ENCODE measurements at regions of chr20 and their contacts with region 1.

Region 1: GRCh38 chr20:4956200-4956810 is 45.0 kb downstream of the SLC23A2 start:
- DNase-seq: no peak
- H3K4me3 ChIP-seq: no peak overlapping the region
- H3K27ac ChIP-seq: no peak overlapping the region
- H3K4me1 ChIP-seq: no peaks in the 10 kb centered on the region
- H3K27me3 ChIP-seq: no peaks in the 10 kb centered on the region
- CTCF ChIP-seq: peak; percentile 75 to 85 (median 77)
- EP300 ChIP-seq: no peak
- POLR2A ChIP-seq: no peak

Region 2: DNA sequence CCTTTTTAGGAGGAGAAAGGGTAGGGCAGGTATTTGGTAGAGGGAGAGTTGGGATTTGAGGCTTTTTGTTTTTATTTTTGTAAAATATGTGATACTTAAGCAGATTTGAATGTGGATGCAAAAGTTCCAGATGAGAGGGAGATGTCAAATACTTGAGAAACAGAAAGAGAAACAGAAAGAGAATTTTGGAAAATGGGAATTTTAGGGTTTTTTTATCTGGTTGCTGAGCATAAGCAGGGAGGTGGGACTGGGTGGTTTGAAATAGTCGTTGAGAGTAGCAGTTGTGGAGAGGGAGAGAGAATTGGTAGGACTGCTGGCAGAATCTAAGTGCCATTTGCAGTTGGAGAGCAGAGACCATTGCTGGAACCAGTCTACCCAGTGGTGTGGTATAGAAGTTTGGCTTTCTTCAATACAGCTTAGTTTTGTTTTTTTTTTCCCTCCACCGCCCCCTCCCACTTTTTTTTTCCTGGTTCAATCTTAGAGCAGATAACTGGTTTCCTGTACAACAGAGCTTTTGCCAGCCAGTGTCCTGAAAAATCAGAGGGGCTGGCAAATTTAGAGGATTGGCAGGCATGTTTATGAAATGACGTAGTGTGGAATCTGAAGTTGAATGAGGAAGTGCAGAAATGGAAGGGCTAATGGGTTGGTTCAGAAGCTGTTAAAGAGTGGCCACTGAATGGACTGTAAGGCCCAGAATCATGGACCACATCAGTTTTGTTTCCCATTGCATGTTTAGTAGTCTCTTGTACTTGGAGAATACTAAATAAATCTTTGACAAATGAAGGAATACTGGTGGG is 1416.8 kb before region 1 on chr20:
- in situ Hi-C with region 1: no loop called
- intact Hi-C with region 1: no loop called
- DNase-seq: no peak
- H3K4me3 ChIP-seq: no peak overlapping the region
- H3K27ac ChIP-seq: no peak overlapping the region
- H3K4me1 ChIP-seq: no peaks in the 10 kb centered on the region
- H3K27me3 ChIP-seq: no peaks in the 10 kb centered on the region
- CTCF ChIP-seq: no peak
- EP300 ChIP-seq: no peak
- POLR2A ChIP-seq: no peak

Region 3: DNA sequence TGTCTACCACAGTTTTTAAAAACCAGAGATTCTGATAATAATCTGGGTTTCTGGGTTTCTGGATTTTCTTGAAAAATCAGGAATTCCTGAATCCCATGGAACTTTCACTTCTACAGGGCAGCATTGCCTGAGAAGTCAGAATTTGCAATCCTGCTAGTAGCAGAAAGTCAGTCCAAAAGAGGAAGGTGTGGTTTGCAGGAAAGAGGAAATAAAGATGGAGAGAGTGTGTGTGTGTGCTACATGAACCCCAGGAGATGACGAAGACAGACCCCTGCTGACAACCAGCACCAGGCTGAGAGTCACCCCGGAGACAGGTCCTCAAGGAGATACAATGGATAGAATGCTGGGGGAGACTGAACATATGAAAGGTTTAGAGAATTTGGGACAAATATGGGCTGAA is 189.7 kb before region 1 on chr20:
- in situ Hi-C with region 1: loop called in 1 of 4 experiments (anchors 5 kb)
- intact Hi-C with region 1: no loop called
- DNase-seq: no peak
- H3K4me3 ChIP-seq: no peak overlapping the region
- H3K27ac ChIP-seq: no peak overlapping the region
- H3K4me1 ChIP-seq: no peaks in the 10 kb centered on the region
- H3K27me3 ChIP-seq: no peaks in the 10 kb centered on the region
- CTCF ChIP-seq: no peak
- EP300 ChIP-seq: no peak
- POLR2A ChIP-seq: no peak

Measured in transverse colon (tissue), 4 donors.